ENCODE measurements at regions of chr11 and their contacts with region 1.

Region 1: DNA sequence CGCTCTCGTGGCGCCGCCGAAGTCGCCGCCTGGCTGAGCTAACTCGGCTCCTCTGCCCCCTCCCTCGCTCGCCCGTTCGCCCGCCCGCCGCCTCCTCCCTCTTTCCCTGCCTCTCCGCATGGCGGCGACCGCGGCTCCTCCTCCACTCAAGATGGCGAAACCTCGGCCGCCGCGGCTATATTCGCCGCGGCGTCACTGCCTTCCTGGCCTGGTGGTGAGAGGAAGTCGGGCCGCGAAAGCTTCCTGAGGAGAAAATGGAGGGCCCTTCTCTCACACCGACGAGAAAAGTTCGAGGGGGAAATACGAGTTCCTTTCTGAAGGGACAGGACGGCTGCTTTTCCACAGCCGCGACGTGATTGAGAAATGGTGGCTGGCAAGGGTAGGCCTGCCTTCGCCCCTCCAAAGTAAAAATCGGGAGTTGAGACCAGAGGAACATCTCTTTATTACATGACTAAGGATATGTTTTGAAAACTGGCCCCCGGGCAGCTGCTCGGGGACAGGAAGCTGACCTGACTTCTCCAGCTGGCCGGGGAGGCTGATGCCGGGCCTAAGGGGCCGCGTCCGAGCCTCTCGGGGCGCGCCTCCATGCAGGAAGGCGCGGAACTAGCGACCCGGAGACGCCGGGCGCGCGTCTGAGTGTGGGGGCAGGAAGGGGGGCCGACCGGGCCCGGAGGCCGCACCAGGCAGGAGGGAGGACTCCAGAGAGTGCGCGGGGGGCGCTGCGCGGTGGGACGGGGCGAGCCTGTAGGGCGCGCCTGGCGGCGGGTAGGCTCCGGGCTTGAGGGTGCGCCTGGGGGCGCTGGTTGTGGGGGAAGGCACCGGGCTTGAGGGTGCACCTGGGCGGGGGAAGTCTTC is at the start of gene DDX6:
- DNase-seq: peak; percentile 94
- H3K4me3 Mint-ChIP-seq: peak within 1 kb of the TSS; percentile 99
- H3K27ac Mint-ChIP-seq: peak within 1 kb of the TSS; percentile 100
- H3K4me1 Mint-ChIP-seq: peaks cover 28% of the 10 kb centered on the region
- H3K27me3 Mint-ChIP-seq: no peaks in the 10 kb centered on the region
- total RNA-seq, gene DDX6: 163 to 180 TPM

Region 2: GRCh38 chr11:118581057-118581456 is 210.3 kb before region 1 on chr11:
- CTCF ChIA-PET with region 1: no interaction called
- POLR2A ChIA-PET with region 1: no interaction called
- DNase-seq: no peak
- H3K4me3 Mint-ChIP-seq: no peak overlapping the region
- H3K27ac Mint-ChIP-seq: no peak overlapping the region
- H3K4me1 Mint-ChIP-seq: peaks cover 18% of the 10 kb centered on the region
- H3K27me3 Mint-ChIP-seq: no peaks in the 10 kb centered on the region

Region 3: GRCh38 chr11:118689851-118690552 is 101.3 kb before region 1 on chr11:
- CTCF ChIA-PET with region 1: interaction called, 10 read pairs
- POLR2A ChIA-PET with region 1: interaction called, 3 read pairs
- DNase-seq: peak; percentile 86
- H3K4me3 Mint-ChIP-seq: peak overlapping the region; percentile 52
- H3K27ac Mint-ChIP-seq: peak overlapping the region; percentile 77
- H3K4me1 Mint-ChIP-seq: peaks cover 50% of the 10 kb centered on the region
- H3K27me3 Mint-ChIP-seq: peaks cover 5% of the 10 kb centered on the region

Region 4: DNA sequence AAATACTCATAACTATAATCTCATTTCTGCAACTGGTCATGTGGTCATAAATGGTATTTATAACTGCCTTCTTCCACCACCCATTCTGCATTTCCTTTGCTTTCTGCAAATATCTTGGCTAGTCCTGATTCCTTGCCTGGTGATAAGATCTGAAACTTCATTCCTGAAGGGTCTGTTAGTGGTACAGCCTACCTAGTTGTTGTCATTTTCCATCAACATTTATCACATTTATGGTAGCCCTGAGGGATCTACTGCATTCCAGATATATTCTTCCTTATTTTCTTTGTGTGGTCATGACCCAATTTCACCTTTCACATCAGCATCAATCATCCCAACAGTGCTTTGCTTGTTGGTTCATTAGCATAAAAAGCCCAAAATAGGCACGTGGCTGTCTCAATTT is 50.4 kb before region 1 on chr11:
- CTCF ChIA-PET with region 1: no interaction called
- POLR2A ChIA-PET with region 1: no interaction called
- DNase-seq: no peak
- H3K4me3 Mint-ChIP-seq: no peak overlapping the region
- H3K27ac Mint-ChIP-seq: no peak overlapping the region
- H3K4me1 Mint-ChIP-seq: no peaks in the 10 kb centered on the region
- H3K27me3 Mint-ChIP-seq: peaks cover 3% of the 10 kb centered on the region

Region 5: GRCh38 chr11:118870396-118871345 is 79.3 kb after region 1 on chr11:
- CTCF ChIA-PET with region 1: interaction called, 7 read pairs
- POLR2A ChIA-PET with region 1: interaction called, 15 read pairs
- DNase-seq: peak; percentile 30
- H3K4me3 Mint-ChIP-seq: peak overlapping the region; percentile 58
- H3K27ac Mint-ChIP-seq: peak overlapping the region; percentile 96
- H3K4me1 Mint-ChIP-seq: peaks cover 54% of the 10 kb centered on the region
- H3K27me3 Mint-ChIP-seq: no peaks in the 10 kb centered on the region

Region 6: DNA sequence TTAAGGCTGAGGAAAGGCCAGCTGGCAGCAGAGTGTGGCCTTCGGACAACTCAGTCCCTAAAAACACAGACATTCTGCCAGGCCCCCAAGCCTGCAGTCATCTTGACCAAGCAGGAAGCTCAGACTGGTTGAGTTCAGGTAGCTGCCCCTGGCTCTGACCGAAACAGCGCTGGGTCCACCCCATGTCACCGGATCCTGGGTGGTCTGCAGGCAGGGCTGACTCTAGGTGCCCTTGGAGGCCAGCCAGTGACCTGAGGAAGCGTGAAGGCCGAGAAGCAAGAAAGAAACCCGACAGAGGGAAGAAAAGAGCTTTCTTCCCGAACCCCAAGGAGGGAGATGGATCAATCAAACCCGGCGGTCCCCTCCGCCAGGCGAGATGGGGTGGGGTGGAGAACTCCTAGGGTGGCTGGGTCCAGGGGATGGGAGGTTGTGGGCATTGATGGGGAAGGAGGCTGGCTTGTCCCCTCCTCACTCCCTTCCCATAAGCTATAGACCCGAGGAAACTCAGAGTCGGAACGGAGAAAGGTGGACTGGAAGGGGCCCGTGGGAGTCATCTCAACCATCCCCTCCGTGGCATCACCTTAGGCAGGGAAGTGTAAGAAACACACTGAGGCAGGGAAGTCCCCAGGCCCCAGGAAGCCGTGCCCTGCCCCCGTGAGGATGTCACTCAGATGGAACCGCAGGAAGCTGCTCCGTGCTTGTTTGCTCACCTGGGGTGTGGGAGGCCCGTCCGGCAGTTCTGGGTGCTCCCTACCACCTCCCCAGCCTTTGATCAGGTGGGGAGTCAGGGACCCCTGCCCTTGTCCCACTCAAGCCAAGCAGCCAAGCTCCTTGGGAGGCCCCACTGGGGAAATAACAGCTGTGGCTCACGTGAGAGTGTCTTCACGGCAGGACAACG is 104.1 kb after region 1 on chr11:
- CTCF ChIA-PET with region 1: interaction called, 3 read pairs
- POLR2A ChIA-PET with region 1: interaction called, 11 read pairs
- DNase-seq: peak; percentile 75
- H3K4me3 Mint-ChIP-seq: peak overlapping the region; percentile 64
- H3K27ac Mint-ChIP-seq: peak overlapping the region; percentile 88
- H3K4me1 Mint-ChIP-seq: peaks cover 76% of the 10 kb centered on the region
- H3K27me3 Mint-ChIP-seq: no peaks in the 10 kb centered on the region

Region 7: GRCh38 chr11:118928108-118928870 is 137.0 kb after region 1 on chr11:
- CTCF ChIA-PET with region 1: interaction called, 29 read pairs
- POLR2A ChIA-PET with region 1: interaction called, 5 read pairs
- DNase-seq: peak; percentile 94
- H3K4me3 Mint-ChIP-seq: peak overlapping the region; percentile 93
- H3K27ac Mint-ChIP-seq: peak overlapping the region; percentile 98
- H3K4me1 Mint-ChIP-seq: peaks cover 51% of the 10 kb centered on the region
- H3K27me3 Mint-ChIP-seq: peaks cover 2% of the 10 kb centered on the region

Measured in activated CD4-positive, alpha-beta T cell treated with anti-CD3 and anti-CD28 coated beads, Interleukin-2, amount 10 ng/mL, durations not matched to agents 7 days and 5 days (primary cell).